BJ (cell line): ENCODE measurements at regions of chr2 and their contacts with region 1.

Region 1: GRCh38 chr2:80499095-80499494 is 194.5 kb upstream of the LRRTM1 start:
- DNase-seq: no peak
- H3K4me3 ChIP-seq: no peak overlapping the region
- H3K27me3 ChIP-seq: no peaks in the 10 kb centered on the region
- CTCF ChIP-seq: peak; percentile 69

Region 2: GRCh38 chr2:80255918-80256781 is 242.9 kb before region 1 on chr2:
- CTCF ChIA-PET with region 1: interaction called, 10 read pairs
- POLR2A ChIA-PET with region 1: no interaction called
- DNase-seq: no peak
- H3K4me3 ChIP-seq: no peak overlapping the region
- H3K27me3 ChIP-seq: no peaks in the 10 kb centered on the region; the same call in 1 of the 2 replicates
- CTCF ChIP-seq: peak; percentile 50

Region 3: DNA sequence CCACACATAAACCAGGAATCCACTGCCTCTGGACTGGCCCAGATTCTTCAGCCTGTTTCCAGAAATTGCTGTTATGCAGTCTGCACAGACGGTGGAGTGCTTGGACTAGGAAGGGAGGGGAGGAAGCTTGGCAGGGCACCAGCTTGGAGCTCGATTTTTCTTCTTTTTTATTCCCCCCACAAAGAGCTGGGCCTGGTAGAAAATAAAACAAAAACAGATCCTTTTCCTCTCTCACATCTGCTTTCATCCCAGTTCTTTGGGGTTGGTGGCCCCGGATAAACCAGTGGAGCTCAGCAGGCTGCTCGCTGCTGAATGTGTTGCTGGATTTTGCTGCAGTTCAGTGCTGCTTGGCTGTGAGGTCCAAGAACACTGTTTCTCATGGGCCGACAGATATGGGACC is 210.5 kb before region 1 on chr2:
- CTCF ChIA-PET with region 1: interaction called, 15 read pairs
- POLR2A ChIA-PET with region 1: no interaction called
- DNase-seq: no peak
- H3K4me3 ChIP-seq: no peak overlapping the region
- H3K27me3 ChIP-seq: no peaks in the 10 kb centered on the region; the same call in 1 of the 2 replicates
- CTCF ChIP-seq: peak; percentile 27; the same call in 1 of the 2 replicates

Region 4: DNA sequence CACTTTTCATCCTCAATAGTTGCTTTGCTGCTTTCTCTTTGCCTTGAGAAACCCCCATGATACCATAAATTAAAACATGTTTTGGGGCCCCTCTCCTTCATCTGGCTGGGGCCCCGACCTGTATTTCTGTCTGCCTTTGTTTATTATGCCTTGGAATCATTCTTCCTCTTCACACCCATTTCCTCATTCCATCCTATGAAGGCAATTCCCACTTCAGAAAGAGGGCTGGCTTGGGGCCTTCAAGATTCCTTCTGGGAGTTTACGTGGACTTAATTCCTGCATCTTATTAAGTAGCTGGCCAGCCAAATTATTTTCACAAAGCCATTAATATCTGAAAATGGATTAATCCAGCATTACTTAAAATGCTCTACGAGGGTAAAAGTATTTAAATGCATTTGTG is 187.8 kb before region 1 on chr2:
- CTCF ChIA-PET with region 1: no interaction called
- POLR2A ChIA-PET with region 1: no interaction called
- DNase-seq: no peak
- H3K4me3 ChIP-seq: no peak overlapping the region
- H3K27me3 ChIP-seq: no peaks in the 10 kb centered on the region
- CTCF ChIP-seq: no peak

Region 5: DNA sequence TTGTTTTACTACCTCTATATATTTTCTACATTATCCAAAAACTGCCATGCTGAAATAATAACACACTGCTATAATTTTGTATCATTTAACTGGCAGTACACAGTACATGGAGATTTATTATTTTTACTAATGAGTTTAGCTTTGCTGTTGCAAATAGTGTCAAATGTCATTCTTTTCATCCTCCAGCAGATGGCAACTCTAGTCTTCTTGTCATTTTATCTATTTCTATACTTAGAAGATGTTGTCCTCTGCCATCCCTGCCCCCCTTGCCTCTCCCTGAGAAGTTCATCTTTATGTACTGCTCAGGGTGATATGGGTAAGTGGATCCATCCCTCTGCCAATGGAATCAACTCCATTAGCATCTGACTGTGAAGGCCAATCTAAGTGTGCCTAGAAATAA is 172.9 kb before region 1 on chr2:
- CTCF ChIA-PET with region 1: interaction called, 96 read pairs
- POLR2A ChIA-PET with region 1: no interaction called
- DNase-seq: no peak
- H3K4me3 ChIP-seq: no peak overlapping the region
- H3K27me3 ChIP-seq: no peaks in the 10 kb centered on the region
- CTCF ChIP-seq: peak; percentile 38

Region 6: DNA sequence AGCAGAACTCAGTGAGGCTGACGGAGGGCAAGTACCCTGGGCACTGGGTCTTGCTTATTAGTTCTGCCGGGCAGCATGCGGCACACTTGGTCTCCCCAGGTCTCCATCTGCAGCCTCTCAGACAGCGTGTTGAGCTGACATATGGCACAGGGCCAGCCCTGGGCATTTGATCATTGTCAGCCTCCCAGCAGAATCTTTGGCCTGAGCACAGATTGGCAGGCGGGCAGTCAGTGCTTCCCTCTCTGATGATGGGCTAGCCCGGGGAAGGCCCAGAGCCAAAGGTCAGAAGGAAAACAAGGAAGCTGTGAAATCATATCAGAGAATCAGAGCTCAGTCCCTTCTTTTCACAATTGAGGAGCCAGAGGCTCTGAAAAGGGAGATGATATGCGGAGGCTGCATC is 44.5 kb before region 1 on chr2:
- CTCF ChIA-PET with region 1: no interaction called
- POLR2A ChIA-PET with region 1: no interaction called
- DNase-seq: no peak
- H3K4me3 ChIP-seq: no peak overlapping the region
- H3K27me3 ChIP-seq: no peaks in the 10 kb centered on the region
- CTCF ChIP-seq: no peak